ENCODE measurements at regions of chr9 and their contacts with region 1.

Region 1: GRCh38 chr9:89000973-89001916 is 10.0 kb downstream of the S1PR3 start:
- DNase-seq: peak; percentile 64 to 85
- H3K4me3 ChIP-seq: no peak overlapping the region
- H3K27ac ChIP-seq: no peak overlapping the region
- H3K4me1 ChIP-seq: 0 out of 2 replicates have a peak, but pooled peaks cover 7% of the 10 kb centered on the region
- H3K27me3 ChIP-seq: no peaks in the 10 kb centered on the region
- CTCF ChIP-seq: peak; percentile 85

Region 2: DNA sequence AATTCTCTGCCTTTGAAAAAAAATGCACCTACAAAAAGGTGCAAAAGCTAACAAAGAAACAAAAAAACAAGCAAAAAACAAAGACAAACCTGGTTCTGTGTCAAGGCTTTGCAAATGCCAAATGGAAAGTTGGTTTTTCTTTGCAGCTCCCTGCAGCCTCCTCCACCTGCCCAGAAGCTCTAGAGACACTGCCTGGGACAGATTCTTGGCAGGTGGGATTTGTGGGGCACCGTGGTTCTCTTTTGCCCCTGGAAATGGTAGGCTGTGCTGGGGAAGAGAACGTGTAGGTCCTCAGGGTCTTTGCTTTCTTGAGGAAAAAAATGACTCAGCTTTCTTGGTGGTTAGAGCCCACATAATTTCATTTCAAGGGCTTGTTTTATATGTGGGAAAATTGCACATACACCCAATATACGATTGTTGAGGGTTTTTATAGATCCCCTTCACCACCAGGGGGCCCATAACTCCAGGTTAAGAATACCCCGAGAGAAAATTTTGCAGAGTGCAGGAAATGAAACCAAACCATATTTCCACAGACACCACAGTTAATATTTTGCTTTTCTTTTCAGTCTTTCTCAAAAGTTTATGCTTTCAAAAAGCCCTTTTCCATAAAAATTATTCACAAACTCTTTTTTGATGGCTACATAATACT is 407.6 kb before region 1 on chr9:
- CTCF ChIA-PET with region 1: no interaction called
- POLR2A ChIA-PET with region 1: no interaction called
- intact Hi-C with region 1: loop called (anchors 1 kb)
- DNase-seq: peak in 1 of 2 experiments; percentile 52
- H3K4me3 ChIP-seq: no peak overlapping the region
- H3K27ac ChIP-seq: no peak overlapping the region
- H3K4me1 ChIP-seq: no peaks in the 10 kb centered on the region
- H3K27me3 ChIP-seq: no peaks in the 10 kb centered on the region
- CTCF ChIP-seq: peak; percentile 86

Region 3: DNA sequence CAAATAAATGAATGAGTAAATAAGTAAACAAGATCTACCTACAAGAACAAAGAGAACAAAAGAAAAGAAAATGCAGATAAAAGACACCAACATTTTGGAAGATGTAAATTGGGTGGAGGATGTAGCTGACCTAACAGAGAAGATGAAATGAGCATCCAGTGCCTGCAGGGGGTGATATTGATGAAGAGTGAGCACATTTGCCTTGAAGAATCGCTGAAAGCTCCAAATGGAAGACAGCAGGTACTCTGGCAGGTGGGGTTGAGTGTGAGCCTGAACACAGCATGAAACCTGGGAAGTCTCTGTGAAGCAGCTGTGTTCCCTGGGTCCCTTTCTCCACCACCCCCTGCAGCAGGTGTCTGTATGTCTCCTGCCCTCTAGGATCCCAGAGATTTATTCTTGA is 340.6 kb before region 1 on chr9:
- CTCF ChIA-PET with region 1: interaction called, 4 read pairs
- POLR2A ChIA-PET with region 1: no interaction called
- intact Hi-C with region 1: loop called (anchors 1 kb)
- DNase-seq: peak in 1 of 2 experiments; percentile 4
- H3K4me3 ChIP-seq: no peak overlapping the region
- H3K27ac ChIP-seq: no peak overlapping the region
- H3K4me1 ChIP-seq: no peaks in the 10 kb centered on the region
- H3K27me3 ChIP-seq: no peaks in the 10 kb centered on the region
- CTCF ChIP-seq: peak; percentile 55

Region 4: DNA sequence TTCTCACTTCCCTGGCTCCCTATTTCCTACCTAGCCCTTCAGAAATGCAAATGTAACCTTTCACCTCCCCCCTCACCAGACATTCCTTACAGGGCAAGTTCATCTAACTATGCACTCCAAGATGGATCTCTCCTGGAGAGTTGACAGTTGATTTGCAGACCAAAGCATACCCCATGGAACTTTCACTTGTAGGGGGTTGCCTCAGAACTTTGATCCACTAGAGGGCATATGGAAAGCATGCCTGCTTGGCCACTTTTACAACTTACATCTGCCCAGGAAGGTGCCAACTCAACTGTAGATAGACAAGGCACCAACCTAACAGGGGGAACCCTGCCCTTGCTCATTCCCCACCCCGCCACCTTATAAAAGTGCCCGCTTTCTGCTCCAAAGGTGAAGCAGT is 278.5 kb before region 1 on chr9:
- CTCF ChIA-PET with region 1: no interaction called
- POLR2A ChIA-PET with region 1: no interaction called
- intact Hi-C with region 1: loop called (anchors 5 kb)
- DNase-seq: peak in 1 of 2 experiments; percentile 7
- H3K4me3 ChIP-seq: no peak overlapping the region
- H3K27ac ChIP-seq: no peak overlapping the region
- H3K4me1 ChIP-seq: no peaks in the 10 kb centered on the region
- H3K27me3 ChIP-seq: no peaks in the 10 kb centered on the region
- CTCF ChIP-seq: peak; percentile 59

Region 5: DNA sequence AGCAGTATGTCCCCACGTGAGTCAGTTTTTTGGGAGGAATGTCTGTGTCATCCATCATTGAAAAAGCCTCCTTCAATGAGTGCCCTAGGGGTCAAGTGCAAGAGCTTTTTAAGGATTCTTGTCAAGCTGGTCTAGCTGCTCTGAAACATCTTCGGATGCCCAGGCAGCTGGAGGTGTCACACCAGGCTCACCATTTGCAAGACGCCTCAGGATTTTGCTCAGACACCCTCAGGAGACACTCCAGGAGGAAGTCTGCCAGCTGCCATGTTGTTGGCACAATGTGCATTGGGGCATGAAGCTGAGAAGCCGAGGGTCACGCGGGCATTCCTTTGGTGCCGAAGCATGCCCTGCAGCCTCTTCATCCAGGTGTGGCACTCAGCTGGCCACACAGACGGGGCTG is 121.0 kb before region 1 on chr9:
- CTCF ChIA-PET with region 1: no interaction called
- POLR2A ChIA-PET with region 1: interaction called, 3 read pairs
- intact Hi-C with region 1: loop called (anchors 2 kb)
- DNase-seq: peak; percentile 77 to 85
- H3K4me3 ChIP-seq: no peak overlapping the region
- H3K27ac ChIP-seq: no peak overlapping the region
- H3K4me1 ChIP-seq: peaks cover 6% of the 10 kb centered on the region; the same call in 1 of the 2 replicates
- H3K27me3 ChIP-seq: no peaks in the 10 kb centered on the region
- CTCF ChIP-seq: no peak